Mucosa of descending colon (tissue), 3 donors: ENCODE measurements at regions of chr16 and their contacts with region 1.

Region 1: GRCh38 chr16:27154705-27155521 is 48.4 kb upstream of the KDM8 start:
- DNase-seq: peak; percentile 67 to 80 (median 73)
- ATAC-seq: peak; percentile 93
- H3K4me3 ChIP-seq: no peak overlapping the region
- H3K4me1 ChIP-seq: peaks cover 13% of the 10 kb centered on the region
- CTCF ChIP-seq: peak; percentile 95

Region 2: DNA sequence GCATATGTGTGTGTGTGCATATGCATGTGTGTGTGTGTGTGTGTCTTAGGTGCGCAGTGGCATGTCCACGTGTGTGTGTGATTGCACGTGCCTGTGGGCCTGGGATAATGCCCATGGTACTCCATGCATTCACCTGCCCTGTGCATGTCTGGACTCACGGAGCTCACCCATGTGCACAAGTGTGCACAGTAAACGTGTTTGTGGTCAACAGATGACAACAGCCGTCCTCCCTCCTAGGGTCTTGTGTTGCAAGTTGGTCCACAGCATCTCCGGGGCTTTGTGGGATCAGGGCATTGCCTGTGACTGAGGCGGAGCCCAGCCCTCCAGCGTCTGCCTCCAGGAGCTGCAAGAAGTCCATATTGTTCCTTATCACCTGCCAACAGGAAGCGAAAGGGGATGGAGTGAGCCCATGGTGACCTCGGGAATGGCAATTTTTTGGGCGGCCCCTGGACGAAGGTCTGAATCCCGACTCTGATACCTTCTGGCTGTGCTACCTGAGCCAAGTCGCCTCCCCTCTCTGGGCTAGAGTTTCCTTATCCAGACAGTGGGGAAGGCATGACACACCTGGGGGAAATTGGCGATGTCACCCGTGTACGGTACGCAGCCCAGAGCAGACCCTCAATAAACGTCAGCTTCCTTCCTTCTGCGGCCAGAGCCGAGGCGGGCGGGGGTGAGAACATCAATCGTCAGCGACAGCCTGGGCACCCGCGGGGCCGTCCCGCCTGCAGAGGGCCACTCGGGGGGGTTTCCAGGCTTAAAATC is 294.7 kb after region 1 on chr16:
- intact Hi-C with region 1: loop called in 1 of 2 experiments (anchors 10 kb)
- DNase-seq: peak; percentile 24 to 80 (median 43)
- ATAC-seq: peak; percentile 65
- H3K4me3 ChIP-seq: no peak overlapping the region
- H3K4me1 ChIP-seq: no peaks in the 10 kb centered on the region
- CTCF ChIP-seq: no peak